SK-N-SH (cell line): ENCODE measurements at regions of chr16 and their contacts with region 1.

Region 1: DNA sequence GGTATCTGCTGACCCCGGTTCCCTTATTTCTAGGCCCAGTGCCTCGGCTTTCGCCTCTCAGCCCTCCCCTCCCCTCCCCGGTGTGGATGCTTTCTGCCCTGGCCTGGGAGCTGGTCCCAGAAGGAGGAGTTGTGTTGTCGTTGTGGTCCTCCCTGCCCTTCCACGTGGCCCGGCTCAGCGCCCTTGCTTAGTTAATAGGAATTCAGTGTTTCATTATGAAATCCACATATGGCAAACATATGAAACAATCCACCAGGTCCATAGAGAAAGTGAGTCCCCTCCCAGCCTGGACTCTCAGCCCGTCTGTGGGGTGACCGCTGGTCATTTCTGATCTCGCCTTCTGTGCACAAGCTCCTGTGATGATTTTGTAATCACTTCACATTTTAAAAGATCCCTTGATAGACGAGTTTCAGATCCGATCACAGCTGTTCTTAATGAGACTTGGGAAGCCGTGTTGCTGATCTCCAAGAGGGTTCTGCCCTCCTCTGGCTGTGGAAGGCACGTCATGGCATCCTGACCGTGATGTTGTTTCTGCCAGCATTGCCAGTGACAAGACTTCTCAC is 112.1 kb downstream of the BANP start:
- DNase-seq: peak; percentile 87
- H3K4me3 ChIP-seq: no peak overlapping the region
- H3K27ac ChIP-seq: peak overlapping the region; percentile 36 to 89
- H3K4me1 ChIP-seq: peaks cover 0 to 38% of the 10 kb centered on the region in 2 experiments; a peak in 3 of 4 replicates
- H3K27me3 ChIP-seq: no peaks in the 10 kb centered on the region
- CTCF ChIP-seq: peak; percentile 52
- EP300 ChIP-seq: no peak
- RAD21 ChIP-seq: peak; percentile 72

Region 2: DNA sequence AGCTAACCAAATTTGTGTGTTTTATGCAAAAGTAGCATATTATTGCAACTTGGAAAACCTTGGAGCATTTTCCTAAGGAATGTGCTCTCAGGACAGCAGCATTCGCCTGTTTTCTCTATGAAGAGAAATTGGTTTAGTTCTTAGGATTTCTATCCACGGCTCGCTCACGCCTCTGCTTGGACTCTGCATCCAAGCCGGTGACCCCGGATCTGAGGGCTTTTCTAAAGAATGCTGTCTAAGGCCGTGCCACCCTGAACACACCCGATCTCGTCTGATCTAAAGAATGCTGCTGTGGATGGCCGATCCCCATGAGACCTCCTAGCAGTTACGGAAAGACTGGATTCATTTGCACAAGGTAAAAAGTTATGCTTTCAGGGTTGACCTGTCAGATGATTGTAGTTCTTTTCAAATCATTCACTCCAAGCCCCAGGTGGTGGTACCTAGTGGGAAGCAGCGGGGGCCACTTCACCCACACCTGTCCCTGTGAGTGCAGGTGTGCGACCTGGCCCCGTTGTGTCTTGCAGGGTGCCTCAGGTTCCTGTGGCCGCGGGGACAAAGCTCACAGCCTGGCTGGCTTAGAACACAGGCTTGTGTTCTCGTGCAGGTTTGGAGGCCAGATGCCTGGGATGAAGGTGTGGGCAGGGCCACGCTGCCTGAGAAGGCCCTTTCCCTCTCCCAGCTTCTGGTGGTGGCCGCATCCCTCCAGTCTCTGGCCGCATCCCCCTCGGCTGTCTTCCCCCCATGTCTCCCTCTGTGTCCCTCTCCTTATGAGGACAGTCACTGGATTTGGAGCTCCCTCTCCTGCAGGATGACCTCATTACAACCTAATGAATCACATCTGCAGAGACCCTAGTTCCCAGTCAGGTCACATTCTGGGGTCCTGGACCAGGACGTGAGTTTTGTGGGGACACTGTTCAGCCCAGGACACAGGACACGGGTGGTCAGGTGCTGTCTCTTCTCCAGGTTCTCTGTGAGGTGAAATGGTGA is 40.9 kb before region 1 on chr16:
- CTCF ChIA-PET with region 1: interaction called, 25 read pairs
- POLR2A ChIA-PET with region 1: no interaction called
- DNase-seq: peak; percentile 61
- H3K4me3 ChIP-seq: no peak overlapping the region
- H3K27ac ChIP-seq: no peak overlapping the region
- H3K4me1 ChIP-seq: peaks cover 13 to 26% of the 10 kb centered on the region in 2 experiments; a peak in 2 of 4 replicates
- H3K27me3 ChIP-seq: no peaks in the 10 kb centered on the region
- CTCF ChIP-seq: no peak
- EP300 ChIP-seq: no peak
- RAD21 ChIP-seq: peak; percentile 43